HCT116 (cell line): ENCODE measurements at regions of chr14 and their contacts with region 1.

Region 1: GRCh38 chr14:67359775-67360648 is at the starts of genes ATP6V1D and EIF2S1:
- DNase-seq: peak; percentile 99
- ATAC-seq: peak; percentile 94
- H3K4me3 ChIP-seq: peak within 1 kb of the TSS; percentile 74 to 93
- H3K27ac ChIP-seq: peak within 1 kb of the TSS; percentile 63
- H3K4me1 ChIP-seq: peaks cover 9 to 17% of the 10 kb centered on the region in 2 experiments; a peak in 3 of 4 replicates
- H3K27me3 ChIP-seq: no peaks in the 10 kb centered on the region
- CTCF ChIP-seq: peak; percentile 73 to 100 (median 90)
- POLR2A ChIP-seq: peak; percentile 79
- RAD21 ChIP-seq: peak; percentile 45; the same call in 1 of the 2 replicates
- total RNA-seq, gene ATP6V1D: 38.5 TPM
- total RNA-seq, gene EIF2S1: 192 TPM

Region 2: GRCh38 chr14:67195279-67195678 is 164.7 kb before region 1 on chr14:
- CTCF ChIA-PET with region 1: no interaction called
- POLR2A ChIA-PET with region 1: no interaction called
- RAD21 ChIA-PET with region 1: no interaction called
- intact Hi-C with region 1: no loop called
- DNase-seq: no peak
- ATAC-seq: no peak
- H3K4me3 ChIP-seq: no peak overlapping the region
- H3K27ac ChIP-seq: no peak overlapping the region
- H3K4me1 ChIP-seq: no peaks in the 10 kb centered on the region
- H3K27me3 ChIP-seq: no peaks in the 10 kb centered on the region
- CTCF ChIP-seq: no peak
- POLR2A ChIP-seq: no peak
- RAD21 ChIP-seq: no peak

Region 3: DNA sequence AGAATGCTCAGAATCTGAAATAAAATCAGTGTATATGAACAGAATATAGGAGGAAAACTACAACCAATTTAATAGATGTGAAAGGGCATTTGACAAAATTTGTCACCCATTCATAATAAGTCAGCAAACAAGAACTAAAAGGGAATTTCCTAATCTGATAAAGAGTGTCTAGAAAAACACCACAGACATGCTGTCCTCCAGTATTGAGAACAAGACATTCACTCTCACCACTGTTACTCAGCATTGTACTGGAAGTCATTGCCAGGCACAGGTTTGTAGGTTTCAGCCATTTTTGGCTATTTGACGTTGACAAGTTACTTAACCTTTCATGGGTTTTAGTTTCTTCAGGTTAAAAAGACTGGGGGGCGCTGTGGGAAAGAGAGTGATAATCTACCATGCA is 13.3 kb after region 1 on chr14:
- CTCF ChIA-PET with region 1: interaction called, 14 read pairs
- POLR2A ChIA-PET with region 1: interaction called, 3 read pairs
- RAD21 ChIA-PET with region 1: no interaction called
- intact Hi-C with region 1: no loop called
- DNase-seq: no peak
- ATAC-seq: no peak
- H3K4me3 ChIP-seq: no peak overlapping the region
- H3K27ac ChIP-seq: no peak overlapping the region
- H3K4me1 ChIP-seq: no peaks in the 10 kb centered on the region
- H3K27me3 ChIP-seq: no peaks in the 10 kb centered on the region
- CTCF ChIP-seq: no peak
- POLR2A ChIP-seq: no peak
- RAD21 ChIP-seq: no peak